ENCODE measurements at regions of chr4 and their contacts with region 1.

Region 1: GRCh38 chr4:127965062-127965802 is at the starts of genes ABHD18 and MFSD8:
- DNase-seq: peak; percentile 100
- ATAC-seq: peak; percentile 100
- H3K4me3 ChIP-seq: peak within 1 kb of the TSS; percentile 60 to 85
- H3K27ac ChIP-seq: peak within 1 kb of the TSS in 1 of 2 donors; percentile 49
- H3K4me1 ChIP-seq: peaks cover 0 to 2% of the 10 kb centered on the region in 2 donors
- H3K27me3 ChIP-seq: no peaks in the 10 kb centered on the region
- total RNA-seq, gene ABHD18: 13.4 to 14.7 TPM
- total RNA-seq, gene MFSD8: 25.8 to 29.3 TPM

Region 2: GRCh38 chr4:127880764-127881562 is 84.3 kb before region 1 on chr4 and contains the start of gene PLK4:
- intact Hi-C with region 1: loop called in 1 of 2 experiments (anchors 10 kb)
- DNase-seq: peak; percentile 98
- ATAC-seq: peak; percentile 98
- H3K4me3 ChIP-seq: peak within 1 kb of the TSS; percentile 50 to 52
- H3K27ac ChIP-seq: no peak within 1 kb of the TSS
- H3K4me1 ChIP-seq: no peaks in the 10 kb centered on the region
- H3K27me3 ChIP-seq: no peaks in the 10 kb centered on the region
- total RNA-seq, gene PLK4: 0.96 to 1.3 TPM

Region 3: GRCh38 chr4:128060699-128061565 is 95.7 kb after region 1 on chr4 and contains the start of gene LARP1B:
- intact Hi-C with region 1: loop called in 1 of 2 experiments (anchors 5 kb)
- DNase-seq: peak; percentile 98 to 99
- ATAC-seq: peak; percentile 98
- H3K4me3 ChIP-seq: peak within 1 kb of the TSS; percentile 86
- H3K27ac ChIP-seq: peak within 1 kb of the TSS; percentile 93 to 94
- H3K4me1 ChIP-seq: peaks cover 0 to 3% of the 10 kb centered on the region in 2 donors
- H3K27me3 ChIP-seq: no peaks in the 10 kb centered on the region
- total RNA-seq, gene LARP1B: 21.4 to 23.9 TPM

Region 4: DNA sequence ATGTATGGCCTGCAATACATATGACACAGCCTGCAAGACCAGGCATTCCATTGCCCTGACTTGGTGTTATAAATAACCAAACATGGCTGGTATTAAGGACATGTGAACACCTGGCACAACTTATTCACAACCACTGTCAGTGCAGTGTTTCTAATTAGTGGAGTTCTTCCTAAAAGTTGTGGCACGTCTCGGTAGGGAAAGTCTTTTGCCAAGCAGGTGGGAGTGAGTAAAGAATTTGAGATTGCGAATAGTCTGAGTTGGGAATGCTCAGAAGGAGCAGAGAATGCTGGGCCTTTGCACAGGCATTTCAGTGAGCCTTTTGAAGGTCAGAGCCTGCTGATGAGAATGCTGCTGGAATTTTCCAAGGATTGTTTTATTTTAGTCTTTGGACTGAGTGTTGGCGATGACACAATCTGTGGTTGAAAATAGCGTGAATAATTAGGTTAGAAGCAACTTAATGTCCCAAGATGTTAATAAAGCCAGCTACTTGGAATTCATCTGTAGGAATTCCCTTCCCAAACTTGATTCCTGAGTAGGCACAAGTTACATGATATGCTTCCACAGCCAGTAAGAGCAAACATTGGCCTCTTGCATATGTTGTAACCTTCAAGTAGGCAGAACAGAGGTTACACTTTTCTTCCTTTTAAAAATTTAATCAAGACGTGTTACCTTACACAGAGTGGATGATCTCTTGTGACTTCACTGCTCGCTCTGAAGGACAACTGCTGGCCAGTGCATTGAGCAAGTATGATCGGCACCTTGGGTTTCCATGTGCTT is 406.0 kb after region 1 on chr4:
- intact Hi-C with region 1: no loop called
- DNase-seq: no peak
- ATAC-seq: peak; percentile 72
- H3K4me3 ChIP-seq: no peak overlapping the region
- H3K27ac ChIP-seq: peak overlapping the region; percentile 82 to 87
- H3K4me1 ChIP-seq: peaks cover 2 to 9% of the 10 kb centered on the region in 2 donors
- H3K27me3 ChIP-seq: no peaks in the 10 kb centered on the region

Measured in aorta (tissue), 5 donors.